ENCODE measurements at regions of chr16 and their contacts with region 1.

Region 1: GRCh38 chr16:4253394-4254150 is 11.7 kb upstream of the SRL start:
- DNase-seq: peak; percentile 99
- ATAC-seq: peak; percentile 98
- H3K4me3 ChIP-seq: peak overlapping the region; percentile 56
- H3K27ac ChIP-seq: peak overlapping the region; percentile 50
- H3K4me1 ChIP-seq: no peaks in the 10 kb centered on the region
- H3K27me3 ChIP-seq: no peaks in the 10 kb centered on the region
- CTCF ChIP-seq: no peak
- POLR2A ChIP-seq: peak; percentile 90
- RAD21 ChIP-seq: peak; percentile 99

Region 2: GRCh38 chr16:2770057-2770951 is 1483.3 kb before region 1 on chr16:
- CTCF ChIA-PET with region 1: no interaction called
- POLR2A ChIA-PET with region 1: no interaction called
- dilution Hi-C with region 1: no loop called
- in situ Hi-C with region 1: no loop called
- intact Hi-C with region 1: no loop called
- DNase-seq: no peak
- ATAC-seq: no peak
- H3K4me3 ChIP-seq: no peak overlapping the region
- H3K27ac ChIP-seq: no peak overlapping the region
- H3K4me1 ChIP-seq: peaks cover 8% of the 10 kb centered on the region
- H3K27me3 ChIP-seq: no peaks in the 10 kb centered on the region
- CTCF ChIP-seq: no peak
- POLR2A ChIP-seq: no peak
- RAD21 ChIP-seq: no peak

Region 3: DNA sequence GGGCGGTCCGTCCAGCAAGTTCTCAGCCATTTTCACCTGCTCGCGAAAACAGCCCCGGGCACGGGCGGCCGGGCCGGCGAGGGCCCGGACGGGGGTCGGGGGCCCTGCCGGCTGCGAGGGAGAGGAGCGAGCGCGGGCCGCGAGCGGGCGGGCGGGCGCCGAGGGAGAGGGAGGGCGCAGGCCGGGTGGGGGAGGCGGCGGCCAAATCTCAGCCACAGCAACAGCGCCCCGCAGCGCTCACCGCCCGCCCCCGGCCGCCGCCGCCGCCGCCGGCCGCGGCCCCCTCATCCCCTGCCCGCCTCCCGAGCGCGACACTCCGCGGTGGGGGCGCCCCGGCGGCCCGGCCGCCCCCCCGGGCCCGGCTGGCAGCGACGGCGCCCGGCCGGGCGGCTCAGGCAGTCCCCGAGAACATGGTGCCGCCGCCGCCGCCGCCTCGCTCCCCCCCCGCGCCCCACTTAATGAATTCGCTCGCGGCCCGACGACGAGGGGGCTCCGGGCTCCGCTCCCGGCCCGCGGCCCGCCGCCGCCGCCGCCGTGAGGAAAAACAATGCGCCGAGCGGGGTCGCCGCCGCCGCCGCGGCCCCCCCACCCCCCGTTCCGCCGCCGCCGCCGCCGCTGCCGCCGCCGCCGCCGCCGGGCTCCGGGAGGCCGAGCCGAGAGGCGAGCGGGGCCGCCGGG is 373.5 kb before region 1 on chr16:
- CTCF ChIA-PET with region 1: no interaction called
- POLR2A ChIA-PET with region 1: no interaction called
- dilution Hi-C with region 1: no loop called
- in situ Hi-C with region 1: no loop called
- intact Hi-C with region 1: loop called (anchors 5 kb)
- DNase-seq: peak; percentile 52
- ATAC-seq: peak; percentile 73
- H3K4me3 ChIP-seq: peak overlapping the region; percentile 76
- H3K27ac ChIP-seq: peak overlapping the region; percentile 66; the same call in 1 of the 2 replicates
- H3K4me1 ChIP-seq: peaks cover 18% of the 10 kb centered on the region
- H3K27me3 ChIP-seq: no peaks in the 10 kb centered on the region
- CTCF ChIP-seq: peak; percentile 49
- POLR2A ChIP-seq: no peak
- RAD21 ChIP-seq: peak; percentile 46

Region 4: GRCh38 chr16:3983081-3983520 is 270.5 kb before region 1 on chr16:
- CTCF ChIA-PET with region 1: interaction called, 11 read pairs
- POLR2A ChIA-PET with region 1: no interaction called
- dilution Hi-C with region 1: no loop called
- in situ Hi-C with region 1: loop called (anchors 10 kb)
- intact Hi-C with region 1: loop called (anchors 5 kb)
- DNase-seq: peak; percentile 69
- ATAC-seq: peak; percentile 64
- H3K4me3 ChIP-seq: no peak overlapping the region
- H3K27ac ChIP-seq: no peak overlapping the region
- H3K4me1 ChIP-seq: peaks cover 13% of the 10 kb centered on the region
- H3K27me3 ChIP-seq: no peaks in the 10 kb centered on the region
- CTCF ChIP-seq: peak; percentile 80
- POLR2A ChIP-seq: no peak
- RAD21 ChIP-seq: peak; percentile 92

Region 5: GRCh38 chr16:4200000-4200780 is 53.4 kb before region 1 on chr16:
- CTCF ChIA-PET with region 1: interaction called, 37 read pairs
- POLR2A ChIA-PET with region 1: no interaction called
- dilution Hi-C with region 1: no loop called
- in situ Hi-C with region 1: no loop called
- intact Hi-C with region 1: loop called (anchors 1 kb)
- DNase-seq: peak; percentile 60
- ATAC-seq: peak; percentile 98
- H3K4me3 ChIP-seq: no peak overlapping the region
- H3K27ac ChIP-seq: no peak overlapping the region
- H3K4me1 ChIP-seq: peaks cover 7% of the 10 kb centered on the region
- H3K27me3 ChIP-seq: no peaks in the 10 kb centered on the region
- CTCF ChIP-seq: peak; percentile 87
- POLR2A ChIP-seq: no peak; the same call in 1 of the 2 replicates
- RAD21 ChIP-seq: peak; percentile 93

Region 6: GRCh38 chr16:4330277-4330874 is 76.8 kb after region 1 on chr16:
- CTCF ChIA-PET with region 1: interaction called, 4 read pairs
- POLR2A ChIA-PET with region 1: no interaction called
- dilution Hi-C with region 1: no loop called
- in situ Hi-C with region 1: no loop called
- intact Hi-C with region 1: loop called (anchors 2 kb)
- DNase-seq: peak; percentile 63
- ATAC-seq: peak; percentile 79
- H3K4me3 ChIP-seq: no peak overlapping the region
- H3K27ac ChIP-seq: no peak overlapping the region
- H3K4me1 ChIP-seq: peaks cover 20% of the 10 kb centered on the region
- H3K27me3 ChIP-seq: no peaks in the 10 kb centered on the region
- CTCF ChIP-seq: peak; percentile 96
- POLR2A ChIP-seq: no peak
- RAD21 ChIP-seq: peak; percentile 97

Region 7: DNA sequence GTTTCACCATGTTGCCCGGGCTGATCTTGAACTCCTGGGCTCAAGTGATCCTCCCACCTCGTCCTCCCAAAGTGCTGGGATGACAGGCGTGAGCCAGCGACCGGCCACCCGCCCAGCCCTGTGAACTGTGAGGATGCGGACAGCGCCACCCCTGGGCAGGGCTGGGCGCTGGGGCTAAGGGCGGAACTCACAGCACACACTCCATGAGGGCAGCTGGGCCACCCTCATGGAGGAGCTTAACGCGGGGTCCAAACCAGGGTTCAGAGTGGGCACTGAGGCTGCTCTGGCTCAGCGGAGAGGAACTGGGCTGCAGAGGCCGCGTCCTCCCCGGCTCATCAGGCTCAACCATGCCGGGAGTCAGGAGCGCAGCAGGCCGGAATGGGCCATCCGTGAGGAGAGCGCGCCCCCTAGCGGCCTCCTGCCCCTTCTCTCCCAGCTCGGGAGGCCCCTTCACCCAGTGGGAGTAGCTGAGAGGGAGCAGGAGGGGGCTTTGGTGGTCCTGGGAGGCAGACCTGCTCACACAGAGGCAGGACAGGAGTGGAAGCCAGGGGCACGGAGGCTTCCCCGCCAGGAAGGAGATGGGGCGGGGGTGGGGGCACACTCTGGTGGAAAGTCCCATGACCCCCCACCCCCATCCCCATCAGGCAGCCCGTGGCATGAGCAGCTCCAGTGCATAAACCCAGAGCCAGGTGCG is 149.0 kb after region 1 on chr16:
- CTCF ChIA-PET with region 1: no interaction called
- POLR2A ChIA-PET with region 1: no interaction called
- dilution Hi-C with region 1: no loop called
- in situ Hi-C with region 1: no loop called
- intact Hi-C with region 1: no loop called
- DNase-seq: peak; percentile 62
- ATAC-seq: peak; percentile 97
- H3K4me3 ChIP-seq: no peak overlapping the region
- H3K27ac ChIP-seq: no peak overlapping the region
- H3K4me1 ChIP-seq: peaks cover 4% of the 10 kb centered on the region
- H3K27me3 ChIP-seq: no peaks in the 10 kb centered on the region
- CTCF ChIP-seq: peak; percentile 80
- POLR2A ChIP-seq: peak; percentile 44; the same call in 1 of the 2 replicates
- RAD21 ChIP-seq: peak; percentile 95

Measured in IMR-90 (cell line).